ENCODE measurements at regions of chr12 and their contacts with region 1.

Region 1: DNA sequence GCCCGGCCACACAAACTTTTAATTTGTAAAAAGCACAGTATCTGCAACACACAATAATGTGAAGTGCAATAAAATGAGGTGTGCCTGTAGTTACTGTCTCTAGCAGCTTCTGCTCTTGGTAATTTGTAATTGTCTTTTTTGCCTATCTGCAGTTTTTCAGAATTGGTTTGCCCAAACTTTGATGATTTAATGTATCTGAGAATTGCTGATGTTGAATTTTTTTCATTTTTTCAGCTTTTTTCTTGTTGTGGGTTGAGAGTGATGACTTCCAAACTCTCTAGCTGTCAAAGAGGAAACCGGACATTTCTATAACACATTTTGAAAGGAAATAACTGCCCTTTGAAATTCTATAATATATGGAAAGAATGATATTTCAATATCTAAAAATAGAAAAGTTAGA is 236.9 kb downstream of the RERGL start:
- DNase-seq: no peak

Region 2: DNA sequence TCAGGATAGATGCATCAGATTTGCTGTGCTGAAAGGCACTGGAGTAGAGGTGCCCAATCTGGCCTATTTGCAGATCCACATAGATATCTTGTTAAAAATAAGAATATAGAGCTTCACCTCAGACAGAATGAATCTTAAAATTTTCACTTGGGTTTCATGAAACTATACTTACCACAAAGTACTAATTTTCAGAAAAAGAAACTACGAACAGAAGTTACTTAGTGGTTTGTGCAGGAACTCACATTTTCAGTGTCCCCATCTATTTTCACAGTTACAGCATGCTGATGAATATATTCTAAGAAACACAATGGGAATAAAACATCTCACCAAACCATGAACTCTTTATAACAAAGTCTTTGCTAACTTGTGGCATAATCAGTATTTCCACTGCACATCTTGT is 212.4 kb before region 1 on chr12:
- intact Hi-C with region 1: no loop called
- DNase-seq: no peak

Region 3: DNA sequence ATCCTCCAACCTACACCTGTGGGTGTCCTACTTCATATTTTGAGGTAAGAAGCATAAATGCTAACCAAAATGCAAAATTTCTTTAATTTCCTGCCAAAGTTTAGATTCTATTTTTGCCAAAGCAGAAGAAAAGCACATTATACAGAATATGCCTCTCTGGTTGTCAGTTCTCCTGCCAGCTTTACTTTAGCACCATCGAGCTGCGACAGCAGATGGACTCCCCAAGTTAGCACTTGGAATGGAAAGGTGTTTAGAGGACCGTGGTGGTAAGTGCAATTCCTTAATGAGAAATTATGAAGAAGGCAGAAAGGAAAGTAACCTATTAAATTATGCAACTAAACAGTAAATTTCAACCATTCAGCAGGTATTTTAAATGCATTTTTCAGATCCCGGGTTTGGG is 89.7 kb before region 1 on chr12:
- intact Hi-C with region 1: loop called (anchors 5 kb)
- DNase-seq: no peak

Region 4: DNA sequence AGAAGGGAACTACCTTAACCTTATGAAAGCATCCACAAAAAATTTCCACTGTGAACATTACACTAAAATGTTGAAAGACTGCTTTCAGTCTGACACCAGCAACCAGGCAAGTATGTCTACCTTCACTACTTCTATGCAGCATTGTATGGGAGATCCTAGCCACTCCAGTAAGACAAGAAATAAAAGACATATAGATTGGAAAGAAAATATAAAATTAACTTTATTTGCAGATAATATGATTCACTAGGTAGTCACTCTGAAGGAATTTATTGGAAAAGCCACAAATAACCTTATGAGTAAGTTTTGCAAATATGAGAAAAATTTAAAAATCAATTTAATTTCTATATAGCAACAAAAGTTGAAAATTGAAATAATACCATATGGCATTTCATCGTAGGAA is 65.0 kb after region 1 on chr12:
- intact Hi-C with region 1: no loop called
- DNase-seq: no peak